Calu3 (cell line): ENCODE measurements at regions of chr17 and their contacts with region 1.

Region 1: DNA sequence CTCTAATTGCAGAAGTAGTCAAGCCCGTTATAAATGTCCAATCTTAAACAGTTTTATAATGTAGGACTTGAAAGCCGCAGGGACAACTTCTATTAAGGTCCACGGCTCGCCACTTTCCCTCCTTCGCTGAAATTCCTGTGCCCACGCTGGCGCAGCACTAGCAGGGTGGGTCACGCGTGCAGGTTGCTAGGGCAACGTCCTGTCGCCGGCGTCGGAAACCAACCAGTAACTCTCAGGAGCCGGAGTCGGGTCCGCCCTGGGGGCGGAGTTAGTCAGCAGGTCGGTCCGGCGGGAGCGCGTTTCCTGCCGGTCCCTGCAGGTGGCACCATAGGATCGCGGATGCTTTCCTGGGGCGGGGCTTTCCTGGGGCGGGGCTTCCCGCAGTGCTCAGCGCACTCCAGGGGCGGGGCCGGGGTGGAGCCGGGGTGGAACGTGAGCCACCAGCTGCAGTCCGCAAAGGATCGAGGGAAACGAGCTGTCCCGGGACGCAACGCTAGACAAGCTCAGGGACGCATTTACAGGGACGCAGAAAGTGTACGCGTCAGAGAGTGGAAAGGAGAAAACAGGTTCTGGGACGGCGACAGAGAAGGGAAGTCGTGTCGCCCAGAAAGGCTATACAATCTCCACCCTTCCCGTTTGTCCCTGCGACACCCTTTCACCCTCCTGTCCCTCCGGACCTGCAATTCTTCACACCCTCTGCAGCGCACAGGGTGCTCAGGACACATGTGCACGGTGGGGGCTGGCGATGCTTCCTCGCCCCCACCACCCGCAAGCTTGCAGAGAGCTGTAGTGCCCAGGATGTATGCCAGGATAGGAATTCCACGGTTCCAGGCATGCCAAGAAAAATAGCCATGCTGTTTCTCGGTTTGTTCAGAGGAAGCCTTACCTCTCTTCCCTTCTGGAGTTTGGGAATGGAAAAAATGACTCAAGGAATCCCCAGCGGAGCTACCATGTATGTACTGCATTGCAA is 12.4 kb downstream of the COPZ2 start:
- DNase-seq: peak; percentile 99
- H3K4me3 Mint-ChIP-seq: peak overlapping the region; percentile 76
- H3K27ac Mint-ChIP-seq: peak overlapping the region; percentile 90
- H3K4me1 Mint-ChIP-seq: peaks cover 49% of the 10 kb centered on the region
- H3K27me3 Mint-ChIP-seq: peaks cover 18% of the 10 kb centered on the region
- CTCF ChIP-seq: peak; percentile 92

Region 2: DNA sequence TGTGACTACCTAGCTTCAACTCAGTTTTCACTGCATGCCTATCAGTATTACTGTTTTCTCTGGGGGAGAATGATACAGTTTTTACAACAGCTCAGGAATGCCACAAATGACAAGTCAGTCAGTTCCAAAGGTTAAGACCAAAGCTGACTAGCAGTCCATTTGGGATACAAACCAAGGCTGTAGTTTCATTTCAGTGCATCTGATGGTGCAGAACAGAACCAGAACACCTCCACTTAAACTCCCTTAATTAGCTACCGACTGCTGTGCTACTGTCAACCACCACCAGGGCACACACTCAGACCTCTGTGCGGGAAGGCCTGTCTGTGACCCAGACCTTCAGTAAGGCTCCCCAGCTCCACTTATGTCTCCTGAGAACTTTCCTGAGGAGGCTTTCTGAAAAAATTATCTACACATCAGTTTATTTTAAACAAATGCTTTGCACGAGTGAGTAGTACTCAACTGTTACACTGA is 43.3 kb after region 1 on chr17:
- CTCF ChIA-PET with region 1: interaction called, 25 read pairs
- intact Hi-C with region 1: no loop called
- DNase-seq: peak; percentile 43
- H3K4me3 Mint-ChIP-seq: no peak overlapping the region
- H3K27ac Mint-ChIP-seq: no peak overlapping the region
- H3K4me1 Mint-ChIP-seq: no peaks in the 10 kb centered on the region
- H3K27me3 Mint-ChIP-seq: no peaks in the 10 kb centered on the region
- CTCF ChIP-seq: peak; percentile 31

Region 3: GRCh38 chr17:48107168-48108132 is 82.2 kb after region 1 on chr17 and contains the start of gene SNX11:
- CTCF ChIA-PET with region 1: interaction called, 10 read pairs
- intact Hi-C with region 1: no loop called
- DNase-seq: peak; percentile 99
- H3K4me3 Mint-ChIP-seq: peak within 1 kb of the TSS; percentile 95
- H3K27ac Mint-ChIP-seq: peak within 1 kb of the TSS; percentile 91
- H3K4me1 Mint-ChIP-seq: peaks cover 31% of the 10 kb centered on the region
- H3K27me3 Mint-ChIP-seq: no peaks in the 10 kb centered on the region
- CTCF ChIP-seq: no peak
- total RNA-seq, gene SNX11: 29.4 and 37.1 TPM in 2 replicates

Region 4: GRCh38 chr17:48335858-48336500 is 310.8 kb after region 1 on chr17:
- CTCF ChIA-PET with region 1: no interaction called
- intact Hi-C with region 1: loop called (anchors 10 kb)
- DNase-seq: peak; percentile 20
- H3K4me3 Mint-ChIP-seq: no peak overlapping the region
- H3K27ac Mint-ChIP-seq: no peak overlapping the region
- H3K4me1 Mint-ChIP-seq: no peaks in the 10 kb centered on the region
- H3K27me3 Mint-ChIP-seq: no peaks in the 10 kb centered on the region
- CTCF ChIP-seq: peak; percentile 50